ENCODE measurements at regions of chr18 and their contacts with region 1.

Region 1: DNA sequence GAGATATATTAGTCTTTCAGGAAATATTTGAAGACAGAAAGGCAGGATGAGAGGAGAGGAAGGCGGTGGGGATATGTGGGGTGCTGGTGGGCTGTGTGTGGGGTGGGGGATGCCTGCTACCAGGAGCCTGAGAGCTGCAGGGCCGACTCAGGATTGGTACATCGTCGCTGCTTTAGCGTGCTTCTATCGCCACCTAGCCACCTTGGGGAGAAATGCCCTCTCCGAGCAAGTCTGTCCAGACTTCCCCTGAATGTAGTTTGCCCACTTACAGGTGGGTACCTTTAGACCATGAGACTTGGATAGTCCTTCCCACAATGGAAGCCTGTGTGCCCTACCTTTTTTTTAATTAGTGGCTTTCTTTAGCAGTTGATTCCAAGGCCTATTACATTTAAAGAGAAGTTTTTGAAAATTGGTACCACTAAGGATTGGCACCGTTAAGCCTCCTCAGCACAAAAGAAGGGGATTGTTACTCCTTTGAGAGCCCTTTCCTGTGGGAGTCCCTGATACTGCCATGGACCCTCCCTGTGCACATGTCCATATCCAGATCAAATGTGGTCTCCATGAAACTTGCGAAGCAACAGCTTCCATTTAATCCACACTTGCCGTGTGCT is 114.1 kb upstream of the NDUFV2 start:
- DNase-seq: peak; percentile 35
- ATAC-seq: peak; percentile 97
- H3K4me3 ChIP-seq: no peak overlapping the region
- H3K27ac ChIP-seq: no peak overlapping the region
- H3K4me1 ChIP-seq: no peaks in the 10 kb centered on the region
- H3K27me3 ChIP-seq: no peaks in the 10 kb centered on the region
- CTCF ChIP-seq: peak; percentile 90

Region 2: GRCh38 chr18:7830468-7830867 is 1157.9 kb before region 1 on chr18:
- CTCF ChIA-PET with region 1: no interaction called
- POLR2A ChIA-PET with region 1: no interaction called
- in situ Hi-C with region 1: no loop called
- intact Hi-C with region 1: no loop called
- DNase-seq: no peak
- ATAC-seq: no peak
- H3K4me3 ChIP-seq: no peak overlapping the region
- H3K27ac ChIP-seq: no peak overlapping the region
- H3K4me1 ChIP-seq: no peaks in the 10 kb centered on the region
- H3K27me3 ChIP-seq: no peaks in the 10 kb centered on the region
- CTCF ChIP-seq: no peak

Region 3: GRCh38 chr18:8654503-8655451 is 333.6 kb before region 1 on chr18:
- CTCF ChIA-PET with region 1: interaction called, 4 read pairs
- POLR2A ChIA-PET with region 1: no interaction called
- in situ Hi-C with region 1: no loop called
- intact Hi-C with region 1: loop called (anchors 2 kb)
- DNase-seq: no peak
- ATAC-seq: peak; percentile 59; the same call in 1 of the 2 replicates
- H3K4me3 ChIP-seq: no peak overlapping the region
- H3K27ac ChIP-seq: no peak overlapping the region; the same call in 1 of the 2 replicates
- H3K4me1 ChIP-seq: peaks cover 3% of the 10 kb centered on the region; the same call in 1 of the 2 replicates
- H3K27me3 ChIP-seq: no peaks in the 10 kb centered on the region
- CTCF ChIP-seq: peak; percentile 73; the same call in 1 of the 2 replicates

Region 4: GRCh38 chr18:8800449-8800848 is 187.9 kb before region 1 on chr18:
- CTCF ChIA-PET with region 1: no interaction called
- POLR2A ChIA-PET with region 1: no interaction called
- in situ Hi-C with region 1: no loop called
- intact Hi-C with region 1: loop called (anchors 10 kb)
- DNase-seq: peak; percentile 84
- ATAC-seq: peak; percentile 92
- H3K4me3 ChIP-seq: peak overlapping the region in 1 of 2 experiments; percentile 20; a peak in 2 of 4 replicates
- H3K27ac ChIP-seq: peak overlapping the region; percentile 81
- H3K4me1 ChIP-seq: peaks cover 46% of the 10 kb centered on the region
- H3K27me3 ChIP-seq: no peaks in the 10 kb centered on the region
- CTCF ChIP-seq: no peak